PC-3 (cell line): ENCODE measurements at regions of chr12 and their contacts with region 1.

Region 1: GRCh38 chr12:50763639-50764285 is at the start of gene ATF1:
- DNase-seq: peak; percentile 91
- ATAC-seq: peak; percentile 83
- H3K4me3 ChIP-seq: peak within 1 kb of the TSS; percentile 91
- H3K27ac ChIP-seq: peak within 1 kb of the TSS; percentile 97
- H3K4me1 ChIP-seq: peaks cover 25% of the 10 kb centered on the region
- H3K27me3 ChIP-seq: no peaks in the 10 kb centered on the region
- CTCF ChIP-seq: no peak
- total RNA-seq, gene ATF1: 46.7 and 67.2 TPM in 2 replicates

Region 2: GRCh38 chr12:50751948-50752721 is 11.6 kb before region 1 on chr12:
- CTCF ChIA-PET with region 1: no interaction called
- POLR2A ChIA-PET with region 1: no interaction called
- intact Hi-C with region 1: no loop called
- DNase-seq: no peak
- ATAC-seq: no peak
- H3K4me3 ChIP-seq: no peak overlapping the region
- H3K27ac ChIP-seq: no peak overlapping the region
- H3K4me1 ChIP-seq: no peaks in the 10 kb centered on the region
- H3K27me3 ChIP-seq: no peaks in the 10 kb centered on the region
- CTCF ChIP-seq: no peak

Region 3: DNA sequence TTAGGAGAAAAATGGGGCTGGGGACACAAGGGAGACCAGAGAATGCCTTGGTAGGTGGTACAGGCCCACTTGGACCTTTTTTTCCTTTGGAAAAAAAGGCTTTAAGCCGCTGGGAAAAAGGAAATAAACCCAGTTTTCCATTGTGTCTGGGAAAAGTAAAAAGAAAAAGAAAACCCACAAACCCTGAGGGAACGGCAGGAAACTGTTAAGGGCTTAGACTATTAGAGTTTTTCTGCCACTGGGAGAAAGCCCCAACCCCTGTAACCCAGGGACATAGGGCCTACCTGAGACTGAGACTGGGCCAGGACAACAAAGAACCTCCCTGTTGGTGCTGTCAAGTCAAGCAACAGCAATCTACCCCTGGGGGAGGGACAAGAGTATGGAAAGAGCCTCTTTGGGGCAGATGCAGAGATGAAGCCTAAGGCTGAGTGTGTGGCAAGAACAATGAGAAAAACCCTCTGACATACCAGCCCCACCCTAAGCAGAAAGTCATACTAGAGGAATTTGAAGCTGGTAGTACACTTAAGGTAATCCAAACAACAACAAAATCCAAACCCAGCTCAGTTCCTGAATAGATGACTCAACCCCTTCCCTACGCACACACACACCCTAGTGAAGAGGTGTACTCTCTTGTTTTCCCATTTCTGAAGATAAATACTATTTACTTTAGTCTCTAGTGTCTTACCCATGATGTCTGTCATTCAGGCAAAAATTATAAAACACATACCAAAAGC is 22.9 kb after region 1 on chr12:
- CTCF ChIA-PET with region 1: interaction called, 17 read pairs
- POLR2A ChIA-PET with region 1: interaction called, 3 read pairs
- intact Hi-C with region 1: loop called (anchors 2 kb)
- DNase-seq: peak; percentile 98
- ATAC-seq: peak; percentile 96
- H3K4me3 ChIP-seq: peak overlapping the region; percentile 11; the same call in 1 of the 2 replicates
- H3K27ac ChIP-seq: peak overlapping the region; percentile 97
- H3K4me1 ChIP-seq: peaks cover 41% of the 10 kb centered on the region
- H3K27me3 ChIP-seq: no peaks in the 10 kb centered on the region
- CTCF ChIP-seq: no peak

Region 4: DNA sequence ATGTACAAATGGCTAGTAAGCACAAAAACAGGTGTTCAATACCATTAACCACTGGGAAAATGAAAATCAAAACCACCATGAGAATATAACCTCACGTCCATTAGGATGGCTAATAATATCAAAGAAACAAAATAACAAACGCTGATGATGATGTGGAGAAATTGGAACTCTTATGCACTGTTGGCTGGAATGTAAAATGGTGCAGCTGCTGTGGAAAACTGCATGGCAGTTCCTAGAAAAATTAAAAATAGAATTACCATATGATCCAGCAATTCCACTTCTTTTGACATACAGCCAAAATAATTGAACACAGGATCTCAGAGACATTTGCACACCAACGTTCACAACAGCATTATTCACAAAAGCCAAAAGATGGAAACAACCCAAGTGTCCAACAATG is 130.5 kb after region 1 on chr12:
- CTCF ChIA-PET with region 1: no interaction called
- POLR2A ChIA-PET with region 1: no interaction called
- intact Hi-C with region 1: no loop called
- DNase-seq: no peak
- ATAC-seq: no peak
- H3K4me3 ChIP-seq: no peak overlapping the region
- H3K27ac ChIP-seq: no peak overlapping the region
- H3K4me1 ChIP-seq: no peaks in the 10 kb centered on the region
- H3K27me3 ChIP-seq: no peaks in the 10 kb centered on the region
- CTCF ChIP-seq: no peak

Region 5: GRCh38 chr12:50986966-50987737 is 223.4 kb after region 1 on chr12:
- CTCF ChIA-PET with region 1: interaction called, 8 read pairs
- POLR2A ChIA-PET with region 1: no interaction called
- intact Hi-C with region 1: loop called (anchors 1 kb)
- DNase-seq: peak; percentile 64
- ATAC-seq: peak; percentile 89
- H3K4me3 ChIP-seq: no peak overlapping the region
- H3K27ac ChIP-seq: no peak overlapping the region
- H3K4me1 ChIP-seq: peaks cover 4% of the 10 kb centered on the region; the same call in 1 of the 2 replicates
- H3K27me3 ChIP-seq: no peaks in the 10 kb centered on the region
- CTCF ChIP-seq: peak; percentile 74

Region 6: DNA sequence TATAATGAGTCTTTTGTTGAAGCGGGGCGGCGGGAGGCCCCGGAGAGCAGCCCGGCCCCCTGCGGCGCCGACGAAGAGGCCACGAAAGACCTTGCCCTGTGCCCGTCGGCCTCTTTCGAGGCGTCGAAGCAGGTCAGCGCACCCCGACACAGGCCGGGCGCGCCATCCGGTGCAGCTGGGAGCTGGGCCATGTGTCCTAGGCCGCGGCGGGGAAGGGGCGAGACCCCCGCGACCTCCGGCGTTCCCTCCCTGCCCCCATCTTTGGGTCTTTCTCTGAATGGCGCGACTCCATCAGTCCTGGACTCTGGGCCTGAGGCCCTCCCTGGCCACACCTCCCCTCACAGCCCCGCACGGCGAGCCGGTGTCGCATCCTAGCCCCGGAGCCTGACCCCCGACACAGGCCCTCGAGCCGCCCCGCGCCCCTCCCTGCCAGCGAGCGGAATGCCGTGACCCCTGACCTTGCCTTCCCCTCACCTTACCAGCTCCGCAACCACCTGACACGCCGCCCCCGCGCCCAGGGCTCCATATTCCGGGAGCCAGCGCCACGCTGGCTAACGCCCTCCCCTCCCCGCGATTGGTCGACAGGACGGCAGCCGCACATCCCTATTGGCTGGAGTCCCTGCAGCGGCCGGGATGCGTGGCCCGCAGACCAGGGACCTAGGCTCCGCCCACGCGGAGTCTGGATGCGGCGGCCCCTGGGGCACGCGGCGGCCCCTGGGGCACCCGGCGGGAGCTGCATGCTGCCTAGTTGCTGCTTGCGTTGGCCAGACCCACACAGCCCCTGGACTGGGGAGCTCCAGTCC is 262.3 kb after region 1 on chr12 and contains the start of gene SLC11A2:
- CTCF ChIA-PET with region 1: interaction called, 5 read pairs
- POLR2A ChIA-PET with region 1: interaction called, 4 read pairs
- intact Hi-C with region 1: loop called (anchors 2 kb)
- DNase-seq: peak; percentile 94
- ATAC-seq: peak; percentile 80
- H3K4me3 ChIP-seq: peak within 1 kb of the TSS; percentile 83
- H3K27ac ChIP-seq: peak within 1 kb of the TSS; percentile 82
- H3K4me1 ChIP-seq: peaks cover 34% of the 10 kb centered on the region
- H3K27me3 ChIP-seq: no peaks in the 10 kb centered on the region
- CTCF ChIP-seq: no peak
- total RNA-seq, gene SLC11A2: 28.4 and 38.8 TPM in 2 replicates